ENCODE measurements at regions of chr5 and their contacts with region 1.

Region 1: DNA sequence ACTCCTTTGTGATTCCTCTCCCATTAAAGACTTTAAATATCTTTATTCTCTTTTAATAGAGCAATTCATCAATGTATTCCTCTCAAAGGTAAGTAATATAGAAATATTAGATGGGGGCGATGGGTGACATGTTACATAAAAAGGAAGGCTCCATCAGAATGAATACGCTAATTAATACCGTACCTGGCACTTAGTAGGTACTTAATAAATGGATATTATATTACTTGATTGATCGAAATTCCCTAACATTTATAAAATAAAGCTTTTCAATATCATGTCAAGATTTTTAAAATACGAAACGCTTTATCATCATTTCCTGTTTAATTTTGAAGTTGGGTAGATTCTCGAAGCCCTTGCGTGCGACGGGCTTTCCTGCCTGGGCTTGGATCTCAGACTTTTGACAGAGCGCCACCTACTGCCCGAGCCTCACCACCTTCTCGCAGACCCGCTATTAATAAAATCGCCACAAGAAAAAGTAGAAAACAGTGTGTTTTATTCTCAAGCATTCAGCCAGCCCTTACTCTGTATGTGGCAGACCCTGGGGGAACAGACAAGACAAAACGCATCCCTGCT is 99.4 kb downstream of the C5orf15 start:
- DNase-seq: peak; percentile 80
- H3K4me3 Mint-ChIP-seq: no peak overlapping the region
- H3K27ac Mint-ChIP-seq: no peak overlapping the region
- H3K4me1 Mint-ChIP-seq: peaks cover 9% of the 10 kb centered on the region
- H3K27me3 Mint-ChIP-seq: peaks cover 6% of the 10 kb centered on the region

Region 2: DNA sequence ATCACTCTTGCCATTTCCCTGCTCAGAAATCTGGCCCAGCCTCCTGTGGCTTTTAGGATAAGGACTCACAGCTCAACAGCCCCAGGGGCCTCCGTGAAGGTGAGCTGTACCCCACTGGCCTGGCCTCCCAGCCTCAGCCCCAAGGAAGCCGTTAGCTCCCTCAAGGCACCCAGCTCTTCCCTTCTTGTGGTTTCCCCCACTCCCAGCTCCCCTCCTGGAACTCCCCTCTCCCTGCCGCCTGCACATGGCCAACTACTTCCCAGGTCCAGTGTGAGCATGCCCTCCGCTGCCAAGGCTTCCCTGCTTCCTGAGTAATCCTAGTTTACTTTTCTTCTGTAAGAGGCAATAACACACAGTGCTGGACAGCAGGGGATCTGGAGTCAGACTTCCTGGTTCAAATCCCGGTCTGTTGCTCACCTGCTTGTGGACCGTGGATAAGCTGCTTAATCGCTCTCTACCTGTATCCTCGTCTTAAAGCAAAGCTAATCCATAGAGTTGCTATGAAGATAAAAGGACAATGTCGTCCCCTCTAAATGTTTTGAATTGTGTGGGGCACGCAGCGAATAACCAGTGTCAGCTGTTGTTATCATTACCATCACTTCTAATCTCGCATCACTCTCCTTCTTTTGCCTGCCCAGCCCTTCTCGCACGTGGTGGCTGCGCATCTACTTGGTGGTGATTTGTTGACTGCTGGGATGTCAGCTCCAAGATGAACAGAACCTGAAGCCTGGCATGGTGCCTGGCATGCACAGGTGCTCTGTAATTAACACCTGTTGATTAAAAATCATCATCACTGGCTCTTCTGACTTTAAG is 12.8 kb after region 1 on chr5:
- CTCF ChIA-PET with region 1: interaction called, 13 read pairs
- POLR2A ChIA-PET with region 1: no interaction called
- DNase-seq: no peak
- H3K4me3 Mint-ChIP-seq: no peak overlapping the region
- H3K27ac Mint-ChIP-seq: no peak overlapping the region
- H3K4me1 Mint-ChIP-seq: no peaks in the 10 kb centered on the region
- H3K27me3 Mint-ChIP-seq: no peaks in the 10 kb centered on the region

Measured in activated CD4-positive, alpha-beta memory T cell treated with anti-CD3 and anti-CD28 coated beads, Interleukin-2, amount 10 ng/mL, durations not matched to agents 7 days and 5 days (primary cell).